Activated CD4-positive, alpha-beta T cell treated with anti-CD3 and anti-CD28 coated beads for 36 hours (primary cell): ENCODE measurements at regions of chr18 and their contacts with region 1.

Region 1: GRCh38 chr18:22194151-22194598 is 24.8 kb downstream of the GATA6 start:
- DNase-seq: no peak
- ATAC-seq: no peak
- H3K4me3 Mint-ChIP-seq: no peak overlapping the region
- H3K27ac Mint-ChIP-seq: no peak overlapping the region
- H3K4me1 Mint-ChIP-seq: no peaks in the 10 kb centered on the region
- H3K27me3 Mint-ChIP-seq: peaks cover 14% of the 10 kb centered on the region

Region 2: DNA sequence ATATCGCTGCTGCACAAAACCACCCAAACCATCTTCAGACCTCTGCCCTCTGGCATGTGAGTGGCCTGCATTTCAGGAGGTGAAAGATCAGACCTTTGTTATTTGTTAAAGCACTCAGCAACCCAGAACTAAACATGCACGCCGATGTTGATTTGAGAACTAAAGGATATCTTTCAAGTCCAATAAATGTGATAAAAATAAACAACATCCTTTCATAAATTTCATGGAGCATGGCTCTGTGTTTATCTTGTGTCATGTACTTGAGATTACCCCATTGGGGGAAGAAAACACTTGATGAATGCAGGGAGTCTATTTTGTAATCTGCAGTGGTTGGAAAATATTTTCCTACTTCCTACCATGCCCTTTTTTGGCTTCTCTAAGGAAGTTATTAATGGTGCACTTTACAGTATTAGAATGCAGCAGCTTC is 95.6 kb before region 1 on chr18:
- CTCF ChIA-PET with region 1: no interaction called
- POLR2A ChIA-PET with region 1: no interaction called
- intact Hi-C with region 1: no loop called
- DNase-seq: no peak
- ATAC-seq: no peak
- H3K4me3 Mint-ChIP-seq: no peak overlapping the region
- H3K27ac Mint-ChIP-seq: no peak overlapping the region
- H3K4me1 Mint-ChIP-seq: no peaks in the 10 kb centered on the region
- H3K27me3 Mint-ChIP-seq: peaks cover 8% of the 10 kb centered on the region

Region 3: GRCh38 chr18:22204996-22205395 is 10.8 kb after region 1 on chr18:
- CTCF ChIA-PET with region 1: no interaction called
- POLR2A ChIA-PET with region 1: interaction called, 10 read pairs
- intact Hi-C with region 1: no loop called
- DNase-seq: no peak
- ATAC-seq: no peak
- H3K4me3 Mint-ChIP-seq: no peak overlapping the region
- H3K27ac Mint-ChIP-seq: no peak overlapping the region
- H3K4me1 Mint-ChIP-seq: no peaks in the 10 kb centered on the region
- H3K27me3 Mint-ChIP-seq: peaks cover 2% of the 10 kb centered on the region

Region 4: GRCh38 chr18:22734776-22735627 is 540.8 kb after region 1 on chr18:
- CTCF ChIA-PET with region 1: no interaction called
- POLR2A ChIA-PET with region 1: no interaction called
- intact Hi-C with region 1: no loop called
- DNase-seq: no peak
- ATAC-seq: no peak
- H3K4me3 Mint-ChIP-seq: no peak overlapping the region
- H3K27ac Mint-ChIP-seq: no peak overlapping the region
- H3K4me1 Mint-ChIP-seq: no peaks in the 10 kb centered on the region
- H3K27me3 Mint-ChIP-seq: peaks cover 3% of the 10 kb centered on the region